Lower leg skin (tissue), 4 donors: ENCODE measurements at regions of chr3 and their contacts with region 1.

Region 1: GRCh38 chr3:38521391-38521987 is 25.3 kb downstream of the EXOG start:
- DNase-seq: peak in 1 of 2 donors; percentile 59
- H3K4me3 ChIP-seq: no peak overlapping the region
- CTCF ChIP-seq: peak in 1 of 3 donors; percentile 55
- POLR2A ChIP-seq: no peak

Region 2: DNA sequence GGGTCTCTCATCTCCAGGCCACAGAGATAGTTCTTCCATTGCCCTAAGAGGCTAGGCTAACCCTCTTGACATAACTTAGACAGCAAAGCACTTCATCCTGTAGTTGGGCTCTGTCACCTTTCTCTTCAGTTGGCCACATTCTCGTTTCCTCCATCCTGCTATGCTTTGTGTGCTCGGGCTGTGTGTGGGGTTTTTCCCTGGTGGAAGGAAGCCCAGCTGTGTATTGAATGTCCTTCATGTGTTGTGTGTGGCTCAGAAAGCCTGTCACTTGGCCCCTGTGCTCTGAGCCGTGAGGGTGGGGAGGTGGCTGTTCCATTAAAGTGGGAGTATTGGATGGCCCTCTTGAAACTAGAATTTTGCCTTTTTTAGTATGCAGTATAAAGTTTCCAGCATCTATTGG is 34.2 kb before region 1 on chr3:
- intact Hi-C with region 1: no loop called
- DNase-seq: no peak
- H3K4me3 ChIP-seq: no peak overlapping the region
- CTCF ChIP-seq: no peak
- POLR2A ChIP-seq: no peak

Region 3: GRCh38 chr3:38651154-38651789 is 129.8 kb after region 1 on chr3:
- intact Hi-C with region 1: loop called (anchors 2 kb)
- DNase-seq: peak; percentile 54 to 90
- H3K4me3 ChIP-seq: no peak overlapping the region
- CTCF ChIP-seq: peak in 1 of 3 donors; percentile 70
- POLR2A ChIP-seq: no peak

Region 4: GRCh38 chr3:38992117-38992760 is 470.8 kb after region 1 on chr3:
- intact Hi-C with region 1: loop called (anchors 10 kb)
- DNase-seq: no peak
- H3K4me3 ChIP-seq: no peak overlapping the region
- CTCF ChIP-seq: no peak
- POLR2A ChIP-seq: no peak